HEK293 (cell line): ENCODE measurements at regions of chr1 and their contacts with region 1.

Region 1: DNA sequence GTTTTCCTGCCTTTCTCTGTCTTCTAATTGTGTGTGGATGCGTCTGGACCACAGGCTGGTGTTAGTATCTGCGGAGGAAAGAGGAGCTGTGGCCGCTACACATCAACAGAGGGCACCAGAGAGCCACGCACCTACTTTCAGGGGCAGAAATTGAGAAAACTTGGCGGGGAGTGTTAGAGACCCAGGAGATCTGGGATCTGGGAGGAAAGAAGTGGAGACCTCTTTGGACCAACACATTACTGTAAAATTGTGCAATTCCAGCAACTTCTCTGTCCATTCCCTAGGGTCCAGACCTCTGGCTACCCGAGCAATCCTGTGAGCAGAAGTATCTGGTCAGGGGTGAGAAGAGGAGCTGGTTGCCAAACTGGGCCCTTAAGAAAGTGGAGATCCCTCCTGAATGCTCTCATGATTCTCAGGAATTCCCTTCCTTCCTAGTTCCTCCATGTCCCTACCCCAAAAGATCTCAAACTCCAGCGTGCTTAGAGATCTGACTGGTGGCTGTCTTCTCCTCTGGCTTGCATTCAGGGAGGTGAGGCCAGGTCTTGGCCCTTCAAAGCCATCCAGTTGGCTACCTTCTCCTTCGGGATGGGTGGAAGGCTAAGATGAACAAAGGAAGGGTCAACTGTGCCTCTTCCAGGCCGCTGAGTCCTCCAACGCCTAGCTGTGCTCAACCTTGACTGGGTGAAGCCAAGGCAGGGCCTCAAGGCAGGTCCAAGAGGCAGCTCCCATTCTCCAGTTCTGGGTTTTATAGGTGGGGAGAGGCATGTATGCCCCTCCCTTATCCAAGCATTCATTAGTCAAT is 1.2 kb upstream of the KIRREL1 start:
- H3K4me3 ChIP-seq: no peak overlapping the region
- H3K27ac ChIP-seq: no peak overlapping the region
- H3K4me1 ChIP-seq: peaks cover 3% of the 10 kb centered on the region; the same call in 1 of the 2 replicates
- CTCF ChIP-seq: peak; percentile 82

Region 2: GRCh38 chr1:157963713-157964112 is 28.5 kb before region 1 on chr1:
- CTCF ChIA-PET with region 1: interaction called, 71 read pairs
- POLR2A ChIA-PET with region 1: no interaction called
- H3K4me3 ChIP-seq: no peak overlapping the region
- H3K27ac ChIP-seq: no peak overlapping the region
- H3K4me1 ChIP-seq: no peaks in the 10 kb centered on the region
- CTCF ChIP-seq: peak; percentile 84

Region 3: DNA sequence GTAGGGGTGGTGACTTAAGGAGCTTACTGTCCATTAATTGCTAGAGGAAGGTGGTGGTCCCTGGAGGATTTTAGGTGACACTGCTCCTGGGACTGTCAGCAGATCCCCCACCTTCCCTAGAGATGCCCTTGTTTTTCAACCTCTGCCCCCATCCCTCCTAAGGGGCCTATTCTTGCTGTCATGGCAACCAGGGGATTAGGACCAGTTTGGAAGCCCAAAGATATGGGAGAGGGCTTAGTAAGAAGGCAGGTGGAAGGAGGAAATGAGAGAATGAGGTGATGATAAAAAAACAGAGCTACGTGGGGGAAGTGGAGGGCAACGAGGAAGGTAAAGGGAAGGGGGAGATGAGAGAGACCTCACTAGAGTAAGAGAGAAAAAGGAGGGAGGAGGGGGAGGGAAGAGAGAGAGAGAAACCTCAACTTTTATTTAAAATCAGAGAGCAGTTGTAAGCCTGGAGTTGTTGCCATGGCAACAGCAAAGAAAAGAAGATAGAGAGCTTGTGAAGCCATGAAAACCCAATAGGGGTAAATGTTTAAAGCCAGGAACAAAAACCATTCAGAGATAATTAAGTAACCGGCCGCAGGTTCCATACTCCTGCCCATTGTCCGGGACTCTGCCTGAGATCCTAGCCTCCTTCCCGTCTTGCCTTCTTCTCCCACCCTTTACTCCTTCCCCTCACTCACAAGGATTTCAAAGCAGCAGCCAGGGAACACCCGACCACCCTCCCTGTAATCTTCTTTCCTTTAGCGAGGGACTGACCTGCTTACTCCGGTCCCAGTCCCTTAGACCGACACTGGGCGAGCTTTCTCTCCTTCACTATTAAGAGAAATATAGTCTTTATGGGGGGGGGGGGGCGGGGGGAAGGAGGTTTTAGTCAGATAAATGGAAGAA is 21.9 kb after region 1 on chr1:
- CTCF ChIA-PET with region 1: interaction called, 29 read pairs
- POLR2A ChIA-PET with region 1: interaction called, 12 read pairs
- H3K4me3 ChIP-seq: no peak overlapping the region
- H3K27ac ChIP-seq: no peak overlapping the region
- H3K4me1 ChIP-seq: peaks cover 7% of the 10 kb centered on the region; the same call in 1 of the 2 replicates
- CTCF ChIP-seq: no peak

Region 4: DNA sequence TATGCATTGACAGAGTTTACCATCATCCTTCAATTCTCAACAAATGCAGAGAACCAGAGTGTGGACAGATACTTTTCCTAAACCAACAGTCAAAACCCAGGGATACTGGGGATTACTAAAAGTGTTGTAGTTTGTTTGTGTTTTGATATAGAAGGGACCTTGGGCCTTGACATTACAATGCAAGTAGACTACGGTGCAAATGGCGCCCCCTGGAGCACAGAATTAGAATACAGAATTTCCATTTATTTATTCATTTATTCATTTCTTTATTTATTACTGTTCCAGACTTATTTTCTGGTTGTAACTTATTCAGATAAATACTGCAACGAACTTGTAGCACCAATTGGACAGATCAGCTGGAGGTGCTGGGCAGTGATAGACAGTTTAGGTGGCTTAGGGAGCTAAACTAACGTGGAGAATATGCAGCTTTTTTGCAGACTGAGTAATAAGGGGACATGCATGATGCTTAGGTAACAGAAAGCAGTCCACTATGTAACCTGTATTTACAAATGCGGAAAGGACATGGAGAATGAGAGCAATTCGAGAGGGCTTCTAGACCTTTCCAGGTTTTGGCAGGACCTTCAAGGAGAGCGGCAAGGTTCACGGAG is 43.8 kb after region 1 on chr1:
- CTCF ChIA-PET with region 1: interaction called, 121 read pairs
- POLR2A ChIA-PET with region 1: interaction called, 5 read pairs
- H3K4me3 ChIP-seq: no peak overlapping the region
- H3K27ac ChIP-seq: no peak overlapping the region
- H3K4me1 ChIP-seq: no peaks in the 10 kb centered on the region
- CTCF ChIP-seq: 0 out of 2 replicates have a peak, but pooled peaks have one; percentile 36

Region 5: DNA sequence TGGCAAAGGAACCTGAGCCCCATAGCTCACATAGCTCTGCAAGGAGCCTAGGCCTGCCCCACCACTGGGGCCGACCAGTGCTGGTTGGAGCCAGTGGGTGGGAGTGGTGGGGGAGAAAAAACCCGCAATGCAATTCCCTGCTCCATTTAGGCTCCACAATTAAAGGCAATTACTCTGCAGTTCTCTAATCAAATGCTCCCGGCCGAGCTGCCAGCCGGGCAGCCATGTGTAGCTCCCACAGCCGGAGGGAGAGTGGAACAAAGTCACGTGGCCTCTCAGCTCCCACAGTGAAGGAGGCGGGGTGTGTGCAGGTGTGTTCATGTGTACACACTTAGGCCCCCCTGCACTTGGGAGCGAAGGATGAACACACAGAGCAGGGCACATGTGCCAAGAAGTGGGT is 82.8 kb after region 1 on chr1:
- CTCF ChIA-PET with region 1: interaction called, 13 read pairs
- POLR2A ChIA-PET with region 1: interaction called, 3 read pairs
- H3K4me3 ChIP-seq: no peak overlapping the region
- H3K27ac ChIP-seq: no peak overlapping the region
- H3K4me1 ChIP-seq: no peaks in the 10 kb centered on the region
- CTCF ChIP-seq: no peak

Region 6: GRCh38 chr1:158124999-158125398 is 132.8 kb after region 1 on chr1:
- CTCF ChIA-PET with region 1: interaction called, 463 read pairs
- POLR2A ChIA-PET with region 1: interaction called, 6 read pairs
- H3K4me3 ChIP-seq: no peak overlapping the region
- H3K27ac ChIP-seq: no peak overlapping the region
- H3K4me1 ChIP-seq: no peaks in the 10 kb centered on the region
- CTCF ChIP-seq: peak; percentile 78